ENCODE measurements at regions of chr2 and their contacts with region 1.

Region 1: DNA sequence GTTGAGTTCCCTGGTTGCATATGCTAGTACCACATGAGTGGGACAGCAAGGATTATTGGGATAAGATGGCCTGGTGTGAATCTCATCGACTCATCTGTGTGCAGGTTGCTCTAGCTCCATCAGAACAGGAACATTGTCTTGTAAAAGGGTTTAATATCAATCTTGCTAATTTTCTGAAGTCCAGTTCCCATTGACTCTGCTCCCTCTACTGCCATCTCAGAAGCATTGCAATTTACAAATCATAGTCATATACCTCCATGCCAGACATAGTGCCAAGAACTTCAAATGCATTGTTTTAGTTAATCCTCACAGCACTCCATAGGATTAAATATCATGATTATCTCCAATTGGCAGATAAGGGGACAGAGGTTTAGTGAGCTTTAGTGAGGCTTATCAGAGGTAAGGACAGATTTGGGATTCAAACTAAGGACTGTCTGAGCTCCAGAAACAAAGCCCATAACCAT is 4.8 kb upstream of the STAT4 start:
- DNase-seq: peak; percentile 42

Region 2: GRCh38 chr2:191051825-191052778 is 103.5 kb before region 1 on chr2:
- CTCF ChIA-PET with region 1: interaction called, 80 read pairs
- POLR2A ChIA-PET with region 1: no interaction called
- DNase-seq: peak; percentile 39